PC-3 (cell line): ENCODE measurements at regions of chr5 and their contacts with region 1.

Region 1: DNA sequence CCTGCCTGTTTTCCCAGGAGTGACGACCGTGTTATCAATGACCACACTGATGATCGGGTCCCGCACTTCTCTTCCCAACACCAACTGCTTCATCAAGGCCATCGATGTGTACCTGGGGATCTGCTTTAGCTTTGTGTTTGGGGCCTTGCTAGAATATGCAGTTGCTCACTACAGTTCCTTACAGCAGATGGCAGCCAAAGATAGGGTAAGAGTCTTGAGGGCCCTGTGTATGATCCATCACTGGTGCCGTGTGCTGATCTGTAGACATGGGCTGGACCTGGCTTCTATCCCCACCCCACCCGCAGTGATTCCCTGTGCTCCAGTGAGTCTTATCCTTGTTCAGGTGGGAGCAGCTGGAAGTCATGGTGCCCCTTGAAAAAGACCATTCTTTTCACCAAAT is 26.0 kb downstream of the GABRP start:
- DNase-seq: peak; percentile 59
- ATAC-seq: peak; percentile 93
- H3K4me3 ChIP-seq: no peak overlapping the region
- H3K27ac ChIP-seq: no peak overlapping the region
- H3K4me1 ChIP-seq: no peaks in the 10 kb centered on the region
- H3K27me3 ChIP-seq: no peaks in the 10 kb centered on the region
- CTCF ChIP-seq: peak; percentile 52

Region 2: GRCh38 chr5:169742771-169743296 is 1066.7 kb before region 1 on chr5:
- CTCF ChIA-PET with region 1: no interaction called
- POLR2A ChIA-PET with region 1: interaction called, 25 read pairs
- intact Hi-C with region 1: no loop called
- DNase-seq: peak; percentile 88
- ATAC-seq: peak; percentile 87
- H3K4me3 ChIP-seq: peak overlapping the region; percentile 20; the same call in 1 of the 2 replicates
- H3K27ac ChIP-seq: peak overlapping the region; percentile 83
- H3K4me1 ChIP-seq: peaks cover 42% of the 10 kb centered on the region
- H3K27me3 ChIP-seq: no peaks in the 10 kb centered on the region
- CTCF ChIP-seq: no peak

Region 3: GRCh38 chr5:170278611-170279452 is 530.7 kb before region 1 on chr5:
- CTCF ChIA-PET with region 1: no interaction called
- POLR2A ChIA-PET with region 1: no interaction called
- intact Hi-C with region 1: no loop called
- DNase-seq: no peak
- ATAC-seq: no peak
- H3K4me3 ChIP-seq: no peak overlapping the region
- H3K27ac ChIP-seq: no peak overlapping the region
- H3K4me1 ChIP-seq: no peaks in the 10 kb centered on the region
- H3K27me3 ChIP-seq: peaks cover 16% of the 10 kb centered on the region; the same call in 1 of the 2 replicates
- CTCF ChIP-seq: no peak

Region 4: GRCh38 chr5:170747851-170748250 is 61.7 kb before region 1 on chr5:
- CTCF ChIA-PET with region 1: no interaction called
- POLR2A ChIA-PET with region 1: no interaction called
- intact Hi-C with region 1: no loop called
- DNase-seq: no peak
- ATAC-seq: no peak
- H3K4me3 ChIP-seq: no peak overlapping the region
- H3K27ac ChIP-seq: no peak overlapping the region
- H3K4me1 ChIP-seq: no peaks in the 10 kb centered on the region; the same call in 1 of the 2 replicates
- H3K27me3 ChIP-seq: no peaks in the 10 kb centered on the region
- CTCF ChIP-seq: peak; percentile 51

Region 5: GRCh38 chr5:170896779-170897178 is 87.2 kb after region 1 on chr5:
- CTCF ChIA-PET with region 1: interaction called, 3 read pairs
- POLR2A ChIA-PET with region 1: no interaction called
- intact Hi-C with region 1: loop called (anchors 1 kb)
- DNase-seq: peak; percentile 19
- ATAC-seq: peak; percentile 32; the same call in 1 of the 2 replicates
- H3K4me3 ChIP-seq: no peak overlapping the region
- H3K27ac ChIP-seq: no peak overlapping the region
- H3K4me1 ChIP-seq: peaks cover 11% of the 10 kb centered on the region; the same call in 1 of the 2 replicates
- H3K27me3 ChIP-seq: no peaks in the 10 kb centered on the region
- CTCF ChIP-seq: peak; percentile 44; the same call in 1 of the 2 replicates

Region 6: DNA sequence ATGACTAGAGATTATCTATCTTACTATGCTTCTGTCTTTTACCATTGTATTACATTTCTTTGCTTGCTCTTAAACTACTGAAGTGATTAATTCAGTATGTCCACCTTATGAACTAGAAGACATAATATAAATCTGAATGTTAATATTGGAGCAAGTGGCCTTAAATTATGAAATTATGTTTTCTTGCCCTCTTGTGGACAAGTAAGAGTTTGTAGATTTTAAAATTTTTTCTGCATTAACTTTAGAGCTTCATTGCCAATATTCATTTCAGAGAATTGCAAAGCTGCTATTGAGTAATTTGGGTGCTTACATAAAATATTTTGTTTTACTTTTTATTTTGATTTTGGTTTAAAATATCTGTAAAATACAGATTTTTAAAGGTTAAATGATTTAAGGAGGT is 107.6 kb after region 1 on chr5:
- CTCF ChIA-PET with region 1: interaction called, 5 read pairs
- POLR2A ChIA-PET with region 1: no interaction called
- intact Hi-C with region 1: loop called (anchors 1 kb)
- DNase-seq: no peak
- ATAC-seq: no peak
- H3K4me3 ChIP-seq: no peak overlapping the region
- H3K27ac ChIP-seq: no peak overlapping the region
- H3K4me1 ChIP-seq: no peaks in the 10 kb centered on the region
- H3K27me3 ChIP-seq: no peaks in the 10 kb centered on the region
- CTCF ChIP-seq: peak; percentile 43; the same call in 1 of the 2 replicates

Region 7: GRCh38 chr5:171152382-171152781 is 342.8 kb after region 1 on chr5:
- CTCF ChIA-PET with region 1: interaction called, 3 read pairs
- POLR2A ChIA-PET with region 1: no interaction called
- intact Hi-C with region 1: loop called (anchors 5 kb)
- DNase-seq: peak; percentile 76
- ATAC-seq: peak; percentile 94
- H3K4me3 ChIP-seq: no peak overlapping the region
- H3K27ac ChIP-seq: no peak overlapping the region
- H3K4me1 ChIP-seq: no peaks in the 10 kb centered on the region
- H3K27me3 ChIP-seq: no peaks in the 10 kb centered on the region
- CTCF ChIP-seq: peak; percentile 75

Region 8: GRCh38 chr5:171166766-171167165 is 357.2 kb after region 1 on chr5:
- CTCF ChIA-PET with region 1: no interaction called
- POLR2A ChIA-PET with region 1: no interaction called
- intact Hi-C with region 1: loop called (anchors 5 kb)
- DNase-seq: no peak
- ATAC-seq: no peak
- H3K4me3 ChIP-seq: no peak overlapping the region
- H3K27ac ChIP-seq: no peak overlapping the region
- H3K4me1 ChIP-seq: no peaks in the 10 kb centered on the region
- H3K27me3 ChIP-seq: no peaks in the 10 kb centered on the region
- CTCF ChIP-seq: no peak

Region 9: GRCh38 chr5:171336521-171337209 is 527.1 kb after region 1 on chr5:
- CTCF ChIA-PET with region 1: no interaction called
- POLR2A ChIA-PET with region 1: no interaction called
- intact Hi-C with region 1: loop called (anchors 1 kb)
- DNase-seq: peak; percentile 74
- ATAC-seq: peak; percentile 86
- H3K4me3 ChIP-seq: peak overlapping the region; percentile 76
- H3K27ac ChIP-seq: no peak overlapping the region
- H3K4me1 ChIP-seq: peaks cover 6% of the 10 kb centered on the region; the same call in 1 of the 2 replicates
- H3K27me3 ChIP-seq: no peaks in the 10 kb centered on the region
- CTCF ChIP-seq: peak; percentile 93